ENCODE measurements at regions of chr20 and their contacts with region 1.

Region 1: DNA sequence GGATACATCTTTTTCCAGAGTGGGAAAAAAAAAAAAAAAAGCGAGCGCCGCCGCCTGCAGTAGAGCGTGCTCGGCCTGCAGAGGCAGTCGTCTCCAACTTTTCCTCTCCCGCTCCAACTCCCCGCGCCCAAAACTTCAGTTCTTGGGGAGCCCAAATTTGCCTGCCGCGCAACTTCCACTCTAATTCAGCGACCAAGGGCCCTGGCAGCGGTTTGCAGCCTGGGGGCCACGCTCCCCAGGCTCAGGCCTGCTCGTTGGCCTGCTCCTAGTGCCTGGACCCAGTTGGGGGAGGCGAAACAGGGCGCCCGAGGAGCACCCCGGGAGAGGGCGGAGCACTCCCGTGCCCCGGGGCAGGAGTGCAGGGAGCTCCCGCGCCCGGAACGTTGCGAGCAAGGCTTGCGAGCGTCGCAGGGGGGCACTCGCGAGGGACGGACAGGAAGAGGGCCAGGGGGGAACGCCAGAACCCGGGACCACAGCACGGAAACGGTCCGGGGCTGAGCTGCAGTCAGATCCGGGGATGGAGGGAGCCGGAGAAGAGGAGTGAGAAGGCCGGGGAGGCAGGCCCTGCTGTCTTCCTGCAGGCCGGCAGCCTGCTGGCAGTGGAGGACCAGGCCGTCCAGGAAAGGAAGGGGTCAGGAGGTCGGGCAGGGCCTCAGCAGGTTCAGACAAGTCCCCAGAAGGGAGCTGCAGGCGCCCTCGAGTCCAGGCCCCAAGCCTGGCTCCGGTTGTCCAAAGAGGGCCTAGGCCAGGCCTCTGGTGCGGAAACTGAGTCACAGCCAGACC is at the start of gene STX16:
- DNase-seq: peak; percentile 84
- H3K4me3 Mint-ChIP-seq: peak within 1 kb of the TSS; percentile 94
- H3K27ac Mint-ChIP-seq: peak within 1 kb of the TSS; percentile 97
- H3K4me1 Mint-ChIP-seq: peaks cover 25% of the 10 kb centered on the region
- H3K27me3 Mint-ChIP-seq: peaks cover 3% of the 10 kb centered on the region
- total RNA-seq, gene STX16: 99.9 and 102 TPM in 2 replicates

Region 2: GRCh38 chr20:57391074-57391554 is 1259.9 kb before region 1 on chr20 and contains the start of gene RBM38:
- intact Hi-C with region 1: loop called (anchors 5 kb)
- DNase-seq: peak; percentile 69
- H3K4me3 Mint-ChIP-seq: peak within 1 kb of the TSS; percentile 94
- H3K27ac Mint-ChIP-seq: peak within 1 kb of the TSS; percentile 94
- H3K4me1 Mint-ChIP-seq: peaks cover 31% of the 10 kb centered on the region
- H3K27me3 Mint-ChIP-seq: no peaks in the 10 kb centered on the region
- total RNA-seq, gene RBM38: 90.4 and 92.5 TPM in 2 replicates

Region 3: DNA sequence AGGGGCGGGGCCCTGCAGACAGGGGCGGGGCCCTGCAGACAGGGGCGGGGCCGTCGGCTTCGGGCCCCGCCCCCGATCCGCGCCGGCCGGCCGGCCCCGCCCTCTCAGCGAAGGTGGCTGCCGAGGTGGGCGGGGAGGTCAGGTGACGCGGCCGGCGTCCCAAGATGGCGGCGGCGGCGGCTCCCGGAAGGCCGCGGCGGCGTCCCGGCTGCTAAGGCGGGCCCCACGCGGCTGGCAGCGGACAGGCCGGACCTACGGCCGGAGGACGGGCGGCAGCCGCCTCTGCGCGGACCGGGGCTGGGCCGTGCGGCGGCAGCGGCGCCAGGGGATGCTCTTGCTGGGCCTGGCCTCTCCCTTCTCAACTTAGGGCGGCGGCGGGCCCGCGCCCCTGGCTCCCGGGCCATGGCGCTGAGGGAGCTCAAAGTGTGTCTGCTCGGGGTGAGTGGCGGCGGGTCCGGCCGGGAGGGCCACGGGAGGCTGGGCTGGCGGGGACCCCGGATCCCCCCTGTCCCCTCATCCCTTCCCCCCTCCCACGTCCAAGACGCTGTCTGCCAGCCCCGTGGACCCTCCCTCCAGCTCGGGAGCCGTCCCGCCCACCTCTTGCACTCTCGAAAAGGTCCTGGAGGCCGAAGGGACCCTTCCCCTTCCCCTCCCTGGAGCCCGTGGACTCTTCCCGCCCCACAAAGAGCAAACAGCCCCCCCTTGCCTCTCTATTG is 341.2 kb before region 1 on chr20 and contains the start of gene RAB22A:
- intact Hi-C with region 1: loop called (anchors 1 kb)
- DNase-seq: peak; percentile 79
- H3K4me3 Mint-ChIP-seq: peak within 1 kb of the TSS; percentile 95
- H3K27ac Mint-ChIP-seq: peak within 1 kb of the TSS; percentile 94
- H3K4me1 Mint-ChIP-seq: peaks cover 63% of the 10 kb centered on the region
- H3K27me3 Mint-ChIP-seq: no peaks in the 10 kb centered on the region
- total RNA-seq, gene RAB22A: 16.9 and 19.2 TPM in 2 replicates

Region 4: DNA sequence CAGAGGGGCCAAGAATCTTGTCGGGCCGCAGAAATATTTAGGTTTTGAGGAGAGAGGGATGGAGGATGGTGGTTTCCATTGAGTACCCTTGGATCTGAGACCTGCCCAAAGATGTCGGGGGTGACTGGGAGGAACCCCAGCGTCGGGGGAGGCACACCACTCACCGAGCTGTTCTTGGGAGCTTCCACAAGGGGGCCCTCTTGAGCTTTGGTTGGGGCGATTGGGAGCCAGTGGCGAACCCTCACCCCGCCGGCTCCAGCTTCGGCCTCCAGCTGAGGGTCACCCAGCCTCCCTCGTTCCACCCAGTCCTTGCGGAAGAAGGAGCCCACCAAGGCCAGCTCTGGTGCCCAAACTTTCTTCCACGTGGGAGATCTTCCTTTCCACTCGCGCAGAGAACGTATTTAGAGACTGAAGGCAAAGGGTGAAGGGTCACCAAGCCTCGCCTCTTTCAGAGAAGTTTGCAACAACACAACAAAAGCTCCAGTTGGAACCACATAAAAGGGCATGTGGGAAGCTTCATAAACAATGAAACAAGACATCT is 169.4 kb before region 1 on chr20:
- intact Hi-C with region 1: loop called (anchors 5 kb)
- DNase-seq: no peak
- H3K4me3 Mint-ChIP-seq: no peak overlapping the region
- H3K27ac Mint-ChIP-seq: no peak overlapping the region
- H3K4me1 Mint-ChIP-seq: no peaks in the 10 kb centered on the region
- H3K27me3 Mint-ChIP-seq: peaks cover 6% of the 10 kb centered on the region

Region 5: GRCh38 chr20:58692594-58693226 is 41.7 kb after region 1 on chr20 and contains the start of gene NPEPL1:
- intact Hi-C with region 1: loop called (anchors 1 kb)
- DNase-seq: peak; percentile 62
- H3K4me3 Mint-ChIP-seq: peak within 1 kb of the TSS; percentile 82
- H3K27ac Mint-ChIP-seq: peak within 1 kb of the TSS; percentile 81
- H3K4me1 Mint-ChIP-seq: peaks cover 10% of the 10 kb centered on the region
- H3K27me3 Mint-ChIP-seq: no peaks in the 10 kb centered on the region
- total RNA-seq, gene NPEPL1: 20.6 and 22.9 TPM in 2 replicates

Region 6: GRCh38 chr20:58888521-58889333 is 237.8 kb after region 1 on chr20:
- intact Hi-C with region 1: loop called (anchors 1 kb)
- DNase-seq: peak; percentile 79
- H3K4me3 Mint-ChIP-seq: peak overlapping the region; percentile 81
- H3K27ac Mint-ChIP-seq: peak overlapping the region; percentile 40
- H3K4me1 Mint-ChIP-seq: peaks cover 33% of the 10 kb centered on the region
- H3K27me3 Mint-ChIP-seq: no peaks in the 10 kb centered on the region

Region 7: GRCh38 chr20:59222253-59223181 is 571.5 kb after region 1 on chr20:
- intact Hi-C with region 1: loop called (anchors 5 kb)
- DNase-seq: peak; percentile 72
- H3K4me3 Mint-ChIP-seq: peak overlapping the region; percentile 82
- H3K27ac Mint-ChIP-seq: peak overlapping the region; percentile 72
- H3K4me1 Mint-ChIP-seq: peaks cover 7% of the 10 kb centered on the region
- H3K27me3 Mint-ChIP-seq: peaks cover 2% of the 10 kb centered on the region

Measured in activated T-helper 1 cell treated with anti-CD3 and anti-CD28 coated beads, Interleukin-12 subunit alpha, Interleukin-12 subunit beta, Interleukin-2, Interleukin-4 antibody, amounts not matched to agents 30 ng/mL and 10 ng/mL and 1 ng/mL, durations not matched to agents 14 hours and 24 hours and 36 hours (primary cell).